ENCODE measurements at regions of chr1 and their contacts with region 1.

Region 1: GRCh38 chr1:222904451-222904850 is 89.6 kb downstream of the DISP1 start:
- DNase-seq: no peak
- ATAC-seq: no peak
- H3K4me3 ChIP-seq: no peak overlapping the region
- H3K4me3 Mint-ChIP-seq: no peak overlapping the region
- H3K27ac ChIP-seq: no peak overlapping the region
- H3K27ac Mint-ChIP-seq: no peak overlapping the region
- H3K4me1 ChIP-seq: no peaks in the 10 kb centered on the region
- H3K4me1 Mint-ChIP-seq: no peaks in the 10 kb centered on the region
- H3K27me3 ChIP-seq: no peaks in the 10 kb centered on the region
- H3K27me3 Mint-ChIP-seq: no peaks in the 10 kb centered on the region
- CTCF ChIP-seq: no peak

Region 2: GRCh38 chr1:222195857-222196256 is 708.6 kb before region 1 on chr1:
- CTCF ChIA-PET with region 1: no interaction called
- POLR2A ChIA-PET with region 1: no interaction called
- intact Hi-C with region 1: loop called in 1 of 2 experiments (anchors 5 kb)
- DNase-seq: no peak
- ATAC-seq: no peak
- H3K4me3 ChIP-seq: no peak overlapping the region
- H3K4me3 Mint-ChIP-seq: no peak overlapping the region
- H3K27ac ChIP-seq: no peak overlapping the region
- H3K27ac Mint-ChIP-seq: no peak overlapping the region
- H3K4me1 ChIP-seq: no peaks in the 10 kb centered on the region
- H3K4me1 Mint-ChIP-seq: no peaks in the 10 kb centered on the region
- H3K27me3 ChIP-seq: no peaks in the 10 kb centered on the region
- H3K27me3 Mint-ChIP-seq: no peaks in the 10 kb centered on the region
- CTCF ChIP-seq: no peak

Region 3: DNA sequence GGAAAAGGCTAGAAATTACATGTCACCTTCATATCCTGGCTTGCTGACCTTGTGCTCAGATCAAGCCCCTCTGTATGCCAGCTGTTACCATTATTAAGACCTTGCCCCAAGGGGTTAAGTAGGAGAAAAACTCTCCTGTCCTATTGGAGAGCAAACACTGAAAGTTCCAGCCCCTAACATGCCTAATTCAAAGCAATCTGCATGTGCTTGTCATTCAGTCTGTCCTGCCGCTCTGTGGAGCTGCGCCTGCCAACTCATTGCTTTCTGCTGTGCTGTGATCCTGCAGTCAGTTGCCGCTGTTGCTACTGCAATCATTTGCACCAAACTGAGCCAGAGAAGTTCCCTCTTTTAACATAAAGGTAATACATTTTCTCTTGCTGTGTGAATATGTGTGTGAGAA is 23.8 kb after region 1 on chr1:
- CTCF ChIA-PET with region 1: no interaction called
- POLR2A ChIA-PET with region 1: no interaction called
- intact Hi-C with region 1: no loop called
- DNase-seq: no peak
- ATAC-seq: no peak
- H3K4me3 ChIP-seq: no peak overlapping the region
- H3K4me3 Mint-ChIP-seq: no peak overlapping the region
- H3K27ac ChIP-seq: no peak overlapping the region
- H3K27ac Mint-ChIP-seq: no peak overlapping the region
- H3K4me1 ChIP-seq: no peaks in the 10 kb centered on the region
- H3K4me1 Mint-ChIP-seq: no peaks in the 10 kb centered on the region
- H3K27me3 ChIP-seq: no peaks in the 10 kb centered on the region
- H3K27me3 Mint-ChIP-seq: no peaks in the 10 kb centered on the region
- CTCF ChIP-seq: no peak